ENCODE measurements at regions of chr22 and their contacts with region 1.

Region 1: GRCh38 chr22:22395245-22395644 is 113.3 kb downstream of the ZNF280B start:
- DNase-seq: no peak
- ATAC-seq: peak; percentile 90
- H3K4me3 Mint-ChIP-seq: peak overlapping the region; percentile 42
- H3K27ac Mint-ChIP-seq: peak overlapping the region; percentile 86
- H3K4me1 Mint-ChIP-seq: peaks cover 48% of the 10 kb centered on the region
- H3K27me3 Mint-ChIP-seq: no peaks in the 10 kb centered on the region
- CTCF ChIP-seq: no peak

Region 2: DNA sequence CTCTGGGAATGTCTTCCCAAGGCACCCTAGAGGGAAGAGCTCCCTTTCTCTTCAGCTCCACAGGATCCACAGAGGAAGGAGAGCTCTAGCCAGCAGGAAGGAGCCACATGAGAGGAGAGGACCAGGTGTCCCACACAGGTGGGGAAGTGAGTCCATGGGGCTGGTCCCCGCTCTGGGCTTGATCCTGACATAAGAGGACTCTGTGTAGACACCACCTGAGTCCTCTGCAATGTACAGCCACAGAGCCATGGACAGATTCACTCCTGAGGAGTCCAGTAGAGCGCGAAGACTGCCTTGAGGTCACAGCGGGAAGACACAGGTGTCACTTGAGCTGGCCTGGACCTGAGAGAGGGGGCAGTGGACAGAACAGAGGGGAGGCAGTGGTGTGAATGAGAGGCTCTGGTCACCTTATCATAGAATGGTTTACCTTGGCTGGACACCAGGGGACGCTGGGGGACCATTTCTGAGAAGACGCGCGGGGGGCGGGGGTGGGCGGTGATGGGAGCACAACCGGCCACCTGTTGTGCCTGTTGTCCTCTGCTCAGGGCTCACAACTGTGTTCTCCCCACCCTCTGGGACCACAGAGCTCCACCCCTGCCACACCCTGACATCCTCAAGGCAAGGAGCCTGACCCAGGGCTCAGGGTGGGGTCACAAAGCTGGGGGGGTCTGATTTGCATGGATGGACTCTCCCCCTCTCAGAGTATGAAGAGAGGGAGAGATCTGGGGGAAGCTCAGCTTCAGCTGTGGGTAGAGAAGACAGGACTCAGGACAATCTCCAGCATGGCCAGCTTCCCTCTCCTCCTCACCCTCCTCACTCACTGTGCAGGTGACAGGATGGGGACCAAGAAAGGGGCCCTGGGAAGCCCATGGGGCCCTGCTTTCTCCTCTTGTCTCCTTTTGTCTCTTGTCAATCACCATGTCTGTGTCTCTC is 14.9 kb before region 1 on chr22:
- CTCF ChIA-PET with region 1: interaction called, 5 read pairs
- POLR2A ChIA-PET with region 1: no interaction called
- intact Hi-C with region 1: loop called (anchors 2 kb)
- DNase-seq: peak; percentile 46
- ATAC-seq: peak; percentile 80
- H3K4me3 Mint-ChIP-seq: peak overlapping the region; percentile 61
- H3K27ac Mint-ChIP-seq: peak overlapping the region; percentile 86
- H3K4me1 Mint-ChIP-seq: peaks cover 79% of the 10 kb centered on the region
- H3K27me3 Mint-ChIP-seq: no peaks in the 10 kb centered on the region
- CTCF ChIP-seq: no peak

Measured in activated B cell treated with CpG ODN at 0.5 μM for 24 hours (primary cell).